ENCODE measurements at regions of chr12 and their contacts with region 1.

Region 1: DNA sequence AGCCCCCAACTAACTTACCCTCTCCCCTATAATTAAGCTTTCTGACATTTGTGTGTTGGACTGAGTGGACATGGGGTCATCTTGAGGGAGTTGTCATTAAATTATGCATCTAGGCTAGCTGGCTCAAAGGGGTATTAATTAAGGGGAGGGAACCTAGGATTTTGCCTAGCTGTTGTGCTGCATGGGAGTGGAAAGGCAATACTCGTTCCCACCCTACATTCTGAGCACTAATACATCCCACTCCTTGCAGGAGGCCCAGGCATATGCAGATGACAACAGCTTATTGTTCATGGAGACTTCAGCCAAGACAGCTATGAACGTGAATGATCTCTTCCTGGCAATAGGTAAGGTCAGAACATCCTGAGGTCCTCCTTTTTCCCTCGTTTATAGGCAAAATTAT is 6.0 kb upstream of the SUOX start:
- DNase-seq: no peak
- ATAC-seq: no peak
- H3K4me3 ChIP-seq: no peak overlapping the region
- H3K27ac ChIP-seq: no peak overlapping the region
- H3K4me1 ChIP-seq: no peaks in the 10 kb centered on the region
- CTCF ChIP-seq: no peak
- EP300 ChIP-seq: no peak
- POLR2A ChIP-seq: no peak
- RAD21 ChIP-seq: no peak

Region 2: GRCh38 chr12:55973598-55974307 is 17.4 kb before region 1 on chr12 and contains the start of gene RAB5B:
- CTCF ChIA-PET with region 1: interaction called, 96 read pairs
- POLR2A ChIA-PET with region 1: interaction called, 4 read pairs
- DNase-seq: peak; percentile 98 to 100
- ATAC-seq: peak; percentile 95 to 96
- H3K4me3 ChIP-seq: peak within 1 kb of the TSS; percentile 93
- H3K27ac ChIP-seq: peak within 1 kb of the TSS; percentile 94 to 95
- H3K4me1 ChIP-seq: peaks cover 20% of the 10 kb centered on the region; the same call in 2 of the 3 replicates
- CTCF ChIP-seq: no peak
- EP300 ChIP-seq: no peak
- POLR2A ChIP-seq: peak; percentile 84
- RAD21 ChIP-seq: no peak
- polyA plus RNA-seq, gene RAB5B: 90.4 and 93.7 TPM in 2 replicates

Region 3: DNA sequence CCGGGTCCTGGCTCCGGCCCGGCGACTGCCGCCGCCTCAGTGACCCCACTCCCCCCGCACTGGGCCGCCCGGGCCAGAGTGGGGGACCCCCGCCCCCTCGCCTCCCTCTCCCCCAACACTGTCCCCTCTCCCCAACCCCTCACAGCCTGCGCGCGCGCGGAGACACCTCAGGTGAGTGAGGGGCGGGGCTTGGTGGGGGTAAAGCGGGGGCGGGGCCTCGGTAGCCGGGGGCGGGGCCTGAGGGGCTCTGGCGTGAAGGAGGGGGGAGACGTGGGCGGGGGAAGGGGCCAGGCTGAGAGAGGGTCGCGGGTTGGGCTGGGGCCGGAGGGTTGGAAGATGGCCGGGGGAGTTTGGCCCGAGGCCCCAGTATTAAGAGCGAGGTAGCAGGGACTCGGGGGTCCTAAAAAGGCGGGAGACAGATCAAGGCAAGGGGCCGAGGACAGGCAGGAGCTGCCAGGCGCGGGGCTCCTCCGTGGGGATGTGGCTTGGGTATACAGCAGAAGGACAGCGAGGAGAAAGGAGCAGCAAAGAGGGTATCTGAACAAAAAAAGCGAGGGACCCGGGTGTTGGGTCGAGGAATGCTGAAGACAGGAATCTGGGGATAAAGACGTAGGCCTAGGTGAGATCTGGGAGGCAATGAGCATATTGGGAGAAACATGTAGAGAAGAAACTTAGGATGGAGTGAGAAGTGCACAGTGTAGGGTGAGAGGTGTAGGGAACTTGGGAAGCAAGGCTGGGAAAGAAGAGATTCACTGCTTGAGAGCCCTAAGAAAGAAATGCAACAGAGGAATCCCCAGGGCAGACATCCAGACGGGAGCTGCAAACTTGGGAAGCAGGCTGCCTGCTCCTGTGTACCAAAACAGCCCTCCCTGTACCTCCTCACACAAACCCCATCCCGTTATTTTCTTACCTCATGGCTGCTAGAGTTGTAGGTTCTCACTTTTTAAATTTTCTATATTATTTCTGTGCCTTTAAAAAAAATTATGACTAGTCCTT is 16.8 kb after region 1 on chr12:
- CTCF ChIA-PET with region 1: interaction called, 33 read pairs
- POLR2A ChIA-PET with region 1: interaction called, 13 read pairs
- DNase-seq: peak in 1 of 2 experiments; percentile 61
- ATAC-seq: peak; percentile 72 to 81
- H3K4me3 ChIP-seq: peak overlapping the region; percentile 98
- H3K27ac ChIP-seq: peak overlapping the region; percentile 98 to 99
- H3K4me1 ChIP-seq: peaks cover 6% of the 10 kb centered on the region; the same call in 2 of the 3 replicates
- CTCF ChIP-seq: no peak
- EP300 ChIP-seq: no peak
- POLR2A ChIP-seq: no peak
- RAD21 ChIP-seq: no peak

Measured in A549 (cell line).